MCF 10A (cell line): ENCODE measurements at regions of chr2 and their contacts with region 1.

Region 1: DNA sequence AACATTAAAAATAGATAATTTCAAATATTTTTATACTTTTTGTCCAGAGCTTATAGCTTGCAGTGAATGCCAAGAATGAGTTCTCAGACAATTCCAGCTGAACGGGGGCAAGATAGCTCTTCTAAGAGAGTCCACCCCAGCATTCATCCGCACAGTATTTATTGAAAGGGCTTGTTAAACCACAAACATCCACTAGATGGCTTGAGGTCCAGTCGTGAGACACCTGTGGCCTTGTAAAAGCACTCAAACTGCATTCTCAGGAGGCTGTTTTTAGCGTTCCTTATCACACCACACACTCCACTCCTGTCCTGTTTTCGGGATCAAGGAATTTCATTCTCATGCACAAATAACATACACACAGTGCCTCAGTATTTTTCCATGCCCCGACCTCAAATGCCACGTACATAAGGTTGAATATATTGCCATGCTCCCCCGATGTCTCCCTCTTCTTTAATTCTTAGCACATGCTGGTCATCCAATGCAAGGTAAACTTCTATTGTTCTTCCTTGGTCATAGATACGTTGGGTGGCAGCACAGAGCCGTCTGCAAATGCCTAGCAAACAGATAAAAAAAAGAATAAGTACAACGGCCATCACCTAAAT is 47.4 kb downstream of the DNAJC10 start:
- DNase-seq: peak; percentile 56
- H3K4me3 Mint-ChIP-seq: no peak overlapping the region
- H3K27ac Mint-ChIP-seq: no peak overlapping the region
- H3K4me1 Mint-ChIP-seq: peaks cover 14% of the 10 kb centered on the region
- H3K27me3 Mint-ChIP-seq: no peaks in the 10 kb centered on the region
- CTCF ChIP-seq: peak; percentile 52

Region 2: GRCh38 chr2:182726473-182726872 is 36.9 kb before region 1 on chr2:
- CTCF ChIA-PET with region 1: no interaction called
- POLR2A ChIA-PET with region 1: no interaction called
- intact Hi-C with region 1: no loop called
- DNase-seq: no peak
- H3K4me3 Mint-ChIP-seq: no peak overlapping the region
- H3K27ac Mint-ChIP-seq: no peak overlapping the region
- H3K4me1 Mint-ChIP-seq: no peaks in the 10 kb centered on the region
- H3K27me3 Mint-ChIP-seq: no peaks in the 10 kb centered on the region
- CTCF ChIP-seq: no peak

Region 3: GRCh38 chr2:182779323-182779722 is 15.9 kb after region 1 on chr2:
- CTCF ChIA-PET with region 1: interaction called, 13 read pairs
- POLR2A ChIA-PET with region 1: no interaction called
- intact Hi-C with region 1: no loop called
- DNase-seq: no peak
- H3K4me3 Mint-ChIP-seq: no peak overlapping the region
- H3K27ac Mint-ChIP-seq: no peak overlapping the region
- H3K4me1 Mint-ChIP-seq: no peaks in the 10 kb centered on the region
- H3K27me3 Mint-ChIP-seq: no peaks in the 10 kb centered on the region
- CTCF ChIP-seq: no peak

Region 4: DNA sequence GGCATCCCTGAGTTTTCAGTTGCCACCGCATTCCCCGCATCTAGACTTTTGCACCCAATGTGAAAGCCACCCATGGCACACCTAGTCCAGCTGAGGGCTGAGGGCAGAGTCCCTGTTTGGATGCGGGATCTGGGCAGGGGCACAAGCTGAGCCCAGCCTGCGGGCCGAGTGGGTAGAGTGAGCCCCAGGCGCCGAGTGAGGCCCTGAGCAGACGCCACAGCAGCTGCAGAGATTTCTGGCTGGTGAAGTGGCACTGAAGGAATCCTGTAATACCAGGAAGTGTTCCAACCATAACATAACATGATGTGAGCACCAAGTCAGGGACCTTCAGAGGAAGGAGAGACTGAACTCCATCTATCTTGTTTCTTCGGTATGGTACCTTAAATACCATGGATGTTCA is 130.8 kb after region 1 on chr2:
- CTCF ChIA-PET with region 1: no interaction called
- POLR2A ChIA-PET with region 1: no interaction called
- intact Hi-C with region 1: no loop called
- DNase-seq: no peak
- H3K4me3 Mint-ChIP-seq: no peak overlapping the region
- H3K27ac Mint-ChIP-seq: no peak overlapping the region
- H3K4me1 Mint-ChIP-seq: no peaks in the 10 kb centered on the region
- H3K27me3 Mint-ChIP-seq: no peaks in the 10 kb centered on the region
- CTCF ChIP-seq: no peak

Region 5: GRCh38 chr2:183059561-183059960 is 296.1 kb after region 1 on chr2:
- CTCF ChIA-PET with region 1: no interaction called
- POLR2A ChIA-PET with region 1: no interaction called
- intact Hi-C with region 1: no loop called
- DNase-seq: peak; percentile 83
- H3K4me3 Mint-ChIP-seq: peak overlapping the region; percentile 13
- H3K27ac Mint-ChIP-seq: peak overlapping the region; percentile 83
- H3K4me1 Mint-ChIP-seq: peaks cover 11% of the 10 kb centered on the region
- H3K27me3 Mint-ChIP-seq: no peaks in the 10 kb centered on the region
- CTCF ChIP-seq: no peak

Region 6: DNA sequence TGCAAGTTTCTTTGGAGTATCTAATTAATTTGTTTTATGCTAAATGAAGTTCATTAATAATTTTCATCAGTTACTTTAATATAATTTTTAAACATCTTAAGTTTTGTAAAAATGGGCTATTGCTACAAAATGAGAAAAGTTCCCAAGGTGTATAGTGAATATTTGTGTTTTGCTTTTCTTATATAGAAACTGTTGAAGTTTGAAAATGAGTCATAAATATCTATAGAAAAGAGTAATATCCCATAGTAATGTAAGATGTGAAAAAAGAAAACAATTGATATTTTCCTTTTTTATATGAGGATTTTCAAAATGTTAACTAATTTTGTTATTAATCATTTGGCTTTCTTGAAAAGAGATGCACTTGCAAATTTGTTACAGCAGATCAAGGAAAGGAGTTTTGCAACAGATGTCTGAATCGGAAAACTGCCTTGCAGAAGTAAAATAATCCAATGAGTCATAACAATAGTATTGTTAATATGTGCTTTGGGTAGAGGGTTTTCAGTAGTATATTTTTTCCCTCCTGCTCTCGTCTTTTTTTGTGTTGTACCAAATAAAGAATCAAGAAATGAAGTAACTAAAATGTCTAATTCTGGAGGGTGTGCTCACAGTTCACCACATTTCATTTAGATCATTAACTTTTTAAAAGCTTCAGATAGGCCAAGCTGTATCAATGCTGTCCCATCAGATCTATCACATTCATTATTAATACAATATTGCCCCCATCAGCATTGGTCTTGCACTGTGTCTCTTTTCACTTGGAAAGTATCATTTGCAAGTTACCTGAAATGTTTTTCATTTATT is 330.6 kb after region 1 on chr2:
- CTCF ChIA-PET with region 1: interaction called, 3 read pairs
- POLR2A ChIA-PET with region 1: no interaction called
- intact Hi-C with region 1: loop called (anchors 1 kb)
- DNase-seq: peak; percentile 47
- H3K4me3 Mint-ChIP-seq: no peak overlapping the region
- H3K27ac Mint-ChIP-seq: no peak overlapping the region
- H3K4me1 Mint-ChIP-seq: peaks cover 5% of the 10 kb centered on the region
- H3K27me3 Mint-ChIP-seq: no peaks in the 10 kb centered on the region
- CTCF ChIP-seq: peak; percentile 27

Region 7: DNA sequence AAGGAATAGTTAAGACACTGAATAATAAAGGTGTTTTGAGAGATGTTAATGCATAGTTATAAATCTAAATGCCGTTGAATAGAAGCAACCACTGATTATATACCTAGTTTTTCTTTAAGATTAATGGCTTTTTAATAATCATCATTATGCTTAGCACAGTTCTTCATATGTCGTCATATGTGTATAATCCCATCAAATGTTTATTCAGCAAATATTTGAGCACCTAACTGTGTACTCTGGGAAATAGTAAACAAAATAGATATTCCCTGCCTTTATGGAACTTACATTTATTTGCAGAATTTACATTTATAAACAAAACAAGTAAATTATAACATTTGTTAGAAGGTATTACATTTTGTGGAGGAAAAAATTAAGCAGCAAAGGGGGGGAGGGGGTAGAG is 370.6 kb after region 1 on chr2:
- CTCF ChIA-PET with region 1: no interaction called
- POLR2A ChIA-PET with region 1: no interaction called
- intact Hi-C with region 1: no loop called
- DNase-seq: no peak
- H3K4me3 Mint-ChIP-seq: no peak overlapping the region
- H3K27ac Mint-ChIP-seq: no peak overlapping the region
- H3K4me1 Mint-ChIP-seq: no peaks in the 10 kb centered on the region
- H3K27me3 Mint-ChIP-seq: no peaks in the 10 kb centered on the region
- CTCF ChIP-seq: no peak